ENCODE measurements at regions of chr17 and their contacts with region 1.

Region 1: DNA sequence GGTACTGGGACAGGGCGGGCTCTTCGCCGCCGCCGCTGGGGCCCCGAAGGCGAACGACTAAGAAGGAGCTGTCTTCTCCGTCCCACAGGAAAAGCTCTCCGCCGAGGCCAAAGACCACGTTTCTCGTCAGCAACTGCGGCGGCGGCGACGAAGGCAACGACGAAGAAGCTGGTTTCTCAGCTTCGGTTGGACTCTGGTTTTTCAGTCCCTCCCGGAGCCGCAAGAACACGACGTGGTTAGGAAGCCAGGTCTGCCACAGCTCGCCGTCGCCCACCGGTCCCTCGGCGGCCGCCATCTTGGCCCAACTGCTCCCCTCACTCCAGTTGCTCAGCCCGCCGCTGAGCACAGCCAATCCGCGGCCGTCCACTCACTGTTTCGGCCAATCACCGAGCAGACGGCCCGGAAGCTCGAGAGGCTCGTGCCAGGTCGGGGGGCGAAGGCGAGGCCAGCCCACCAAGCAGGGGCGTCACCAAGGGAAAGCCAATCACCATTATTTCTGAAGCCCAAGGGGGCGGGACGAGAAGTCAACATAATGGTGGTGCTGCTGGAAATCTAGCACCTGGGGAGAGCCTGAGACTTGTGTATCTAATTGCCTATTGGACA is at the start of gene NUP88:
- DNase-seq: peak; percentile 86 to 97 (median 95)
- ATAC-seq: peak; percentile 94
- H3K4me3 ChIP-seq: peak within 1 kb of the TSS; percentile 93
- H3K4me3 Mint-ChIP-seq: peak within 1 kb of the TSS; percentile 93 to 100 (median 98)
- H3K27ac ChIP-seq: peak within 1 kb of the TSS; percentile 94
- H3K27ac Mint-ChIP-seq: peak within 1 kb of the TSS; percentile 89 to 100 (median 99)
- H3K4me1 ChIP-seq: peaks cover 26% of the 10 kb centered on the region in 2 donors
- H3K4me1 Mint-ChIP-seq: peaks cover 16 to 56% (median 40%) of the 10 kb centered on the region in 7 donors
- H3K27me3 ChIP-seq: no peaks in the 10 kb centered on the region
- H3K27me3 Mint-ChIP-seq: peaks cover 0 to 2% (median 0%) of the 10 kb centered on the region in 5 donors
- total RNA-seq, gene NUP88: 85.7 to 135 (median 111) TPM

Region 2: GRCh38 chr17:4948931-4949320 is 470.5 kb before region 1 on chr17:
- CTCF ChIA-PET with region 1: no interaction called
- POLR2A ChIA-PET with region 1: no interaction called
- intact Hi-C with region 1: loop called (anchors 2 to 5 kb)
- DNase-seq: peak in 7 of 9 donors; percentile 69 to 84 (median 79)
- ATAC-seq: peak; percentile 58
- H3K4me3 ChIP-seq: peak overlapping the region; percentile 98
- H3K4me3 Mint-ChIP-seq: peak overlapping the region; percentile 92 to 100 (median 98)
- H3K27ac ChIP-seq: peak overlapping the region; percentile 89
- H3K27ac Mint-ChIP-seq: peak overlapping the region; percentile 83 to 100 (median 96)
- H3K4me1 ChIP-seq: peaks cover 27 to 35% of the 10 kb centered on the region in 2 donors
- H3K4me1 Mint-ChIP-seq: peaks cover 37 to 50% (median 43%) of the 10 kb centered on the region in 7 donors
- H3K27me3 ChIP-seq: no peaks in the 10 kb centered on the region
- H3K27me3 Mint-ChIP-seq: peaks cover 0 to 2% (median 0%) of the 10 kb centered on the region in 5 donors

Region 3: GRCh38 chr17:5111402-5112204 is 307.9 kb before region 1 on chr17 and contains the start of gene ZNF232:
- CTCF ChIA-PET with region 1: no interaction called
- POLR2A ChIA-PET with region 1: no interaction called
- intact Hi-C with region 1: loop called in 1 of 2 experiments (anchors 5 kb)
- DNase-seq: peak; percentile 83 to 95 (median 87)
- ATAC-seq: peak; percentile 94
- H3K4me3 ChIP-seq: peak within 1 kb of the TSS; percentile 80
- H3K4me3 Mint-ChIP-seq: peak within 1 kb of the TSS; percentile 82 to 96 (median 92)
- H3K27ac ChIP-seq: peak within 1 kb of the TSS; percentile 74
- H3K27ac Mint-ChIP-seq: peak within 1 kb of the TSS; percentile 59 to 96 (median 88)
- H3K4me1 ChIP-seq: peaks cover 9% of the 10 kb centered on the region in 2 donors
- H3K4me1 Mint-ChIP-seq: peaks cover 14 to 48% (median 36%) of the 10 kb centered on the region in 7 donors
- H3K27me3 ChIP-seq: peaks cover 0 to 3% of the 10 kb centered on the region in 2 donors
- H3K27me3 Mint-ChIP-seq: peaks cover 12 to 19% (median 16%) of the 10 kb centered on the region in 5 donors
- total RNA-seq, gene ZNF232: 5.1 to 20.3 (median 11.2) TPM

Region 4: DNA sequence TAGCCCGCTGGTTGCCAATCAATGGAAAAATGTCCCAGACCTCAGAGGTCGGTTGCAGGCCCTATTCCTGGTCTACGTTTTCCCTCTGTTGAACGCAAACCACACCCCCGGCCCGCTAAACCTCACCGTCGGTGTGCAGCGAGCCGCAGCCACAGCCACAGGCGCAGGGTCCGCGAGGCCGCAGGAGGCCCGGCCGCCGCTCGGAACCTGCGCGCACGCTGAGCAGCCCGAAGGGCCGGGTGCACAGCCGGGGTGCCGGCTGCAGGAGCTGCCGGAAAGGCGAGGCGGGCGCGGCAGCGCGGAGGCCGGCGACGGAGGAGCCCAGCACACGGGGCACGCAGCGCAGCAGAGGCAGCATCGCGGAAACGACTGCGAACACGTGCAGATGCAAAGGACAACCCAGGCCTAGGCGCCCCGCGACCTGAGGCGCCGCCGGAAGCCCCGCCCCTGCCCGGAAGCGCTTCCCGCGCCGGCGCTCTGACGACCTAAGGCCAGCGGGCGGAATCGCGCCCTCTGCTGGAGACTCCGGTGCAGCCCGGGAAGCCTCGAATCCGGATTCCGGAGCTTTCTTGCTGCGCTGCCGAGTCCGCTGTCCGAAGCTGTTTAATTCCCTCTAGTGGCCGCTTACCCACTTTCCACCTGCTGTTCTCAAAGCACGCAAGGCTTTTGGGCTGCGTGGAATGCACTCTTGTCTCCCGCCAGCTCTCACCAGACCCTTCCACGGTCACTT is 19.4 kb after region 1 on chr17 and contains the start of gene C1QBP:
- CTCF ChIA-PET with region 1: interaction called, 9 read pairs
- POLR2A ChIA-PET with region 1: interaction called, 46 read pairs
- intact Hi-C with region 1: loop called (anchors 1 kb)
- DNase-seq: peak; percentile 85 to 96 (median 91)
- ATAC-seq: peak; percentile 98
- H3K4me3 ChIP-seq: peak within 1 kb of the TSS; percentile 80
- H3K4me3 Mint-ChIP-seq: peak within 1 kb of the TSS; percentile 80 to 95 (median 90)
- H3K27ac ChIP-seq: peak within 1 kb of the TSS; percentile 89
- H3K27ac Mint-ChIP-seq: peak within 1 kb of the TSS; percentile 90 to 98 (median 94)
- H3K4me1 ChIP-seq: peaks cover 19 to 28% of the 10 kb centered on the region in 2 donors
- H3K4me1 Mint-ChIP-seq: peaks cover 16 to 43% (median 37%) of the 10 kb centered on the region in 7 donors
- H3K27me3 ChIP-seq: no peaks in the 10 kb centered on the region
- H3K27me3 Mint-ChIP-seq: no peaks in the 10 kb centered on the region
- total RNA-seq, gene C1QBP: 58.0 to 162 (median 82.3) TPM

Region 5: DNA sequence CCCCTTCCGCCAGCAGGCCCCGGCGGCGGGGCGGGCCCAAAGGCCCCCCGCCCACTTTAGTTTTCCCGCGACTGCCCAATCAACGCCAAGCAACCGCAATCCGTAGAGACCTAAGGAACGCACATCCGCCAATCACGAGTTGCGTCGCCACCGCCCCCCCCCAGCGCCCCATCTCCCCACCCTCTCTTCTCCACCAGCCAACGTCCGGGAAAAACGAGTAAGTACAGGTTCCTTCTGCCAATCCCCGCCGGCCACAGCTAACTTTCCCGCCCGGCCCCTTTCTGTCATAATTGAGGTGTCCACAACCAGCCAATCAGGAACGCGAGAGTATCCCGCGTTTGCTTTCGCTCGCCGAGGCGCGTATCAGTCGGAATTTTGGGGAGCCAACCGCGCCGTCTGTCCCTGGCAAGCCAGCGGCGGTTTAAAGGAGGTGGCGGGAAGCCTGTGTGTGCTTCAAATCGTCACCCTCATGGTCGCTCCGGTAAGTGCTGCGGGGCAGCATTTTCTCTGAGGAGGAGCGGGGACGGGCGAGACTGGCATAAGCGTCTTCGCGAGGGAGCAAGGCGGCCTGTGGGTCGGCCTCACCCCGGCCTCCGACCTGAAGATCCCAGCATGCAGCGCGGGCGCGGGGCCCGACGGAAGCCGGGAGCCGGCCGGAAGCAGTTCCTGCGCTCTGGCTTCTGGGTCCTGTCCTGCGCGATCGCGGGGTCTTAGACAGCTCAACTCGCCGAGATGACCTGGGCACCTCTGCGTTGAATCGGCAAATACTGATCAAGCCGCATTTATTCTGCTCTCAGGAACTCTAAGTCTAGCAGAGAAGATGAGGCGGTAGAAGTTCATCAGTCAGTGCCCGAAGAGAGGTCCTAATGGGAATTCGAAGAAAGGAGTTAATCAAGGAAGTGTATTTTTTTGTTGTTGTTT is 67.0 kb after region 1 on chr17 and contains the start of gene MIS12:
- CTCF ChIA-PET with region 1: no interaction called
- POLR2A ChIA-PET with region 1: interaction called, 16 read pairs
- intact Hi-C with region 1: loop called (anchors 1 kb)
- DNase-seq: peak; percentile 78 to 100 (median 97)
- ATAC-seq: peak; percentile 93
- H3K4me3 ChIP-seq: peak within 1 kb of the TSS; percentile 94
- H3K4me3 Mint-ChIP-seq: peak within 1 kb of the TSS; percentile 88 to 97 (median 94)
- H3K27ac ChIP-seq: peak within 1 kb of the TSS; percentile 98
- H3K27ac Mint-ChIP-seq: peak within 1 kb of the TSS; percentile 95 to 99 (median 98)
- H3K4me1 ChIP-seq: peaks cover 21 to 28% of the 10 kb centered on the region in 2 donors
- H3K4me1 Mint-ChIP-seq: peaks cover 22 to 77% (median 66%) of the 10 kb centered on the region in 7 donors
- H3K27me3 ChIP-seq: no peaks in the 10 kb centered on the region
- H3K27me3 Mint-ChIP-seq: no peaks in the 10 kb centered on the region
- total RNA-seq, gene MIS12: 16.3 to 53.6 (median 38.4) TPM

Region 6: GRCh38 chr17:6443692-6444569 is 1024.5 kb after region 1 on chr17 and contains the start of gene PIMREG:
- CTCF ChIA-PET with region 1: no interaction called
- POLR2A ChIA-PET with region 1: no interaction called
- intact Hi-C with region 1: loop called in 1 of 2 experiments (anchors 5 kb)
- DNase-seq: peak; percentile 74 to 93 (median 84)
- ATAC-seq: peak; percentile 98
- H3K4me3 ChIP-seq: peak within 1 kb of the TSS; percentile 77
- H3K4me3 Mint-ChIP-seq: peak within 1 kb of the TSS; percentile 85 to 98 (median 92)
- H3K27ac ChIP-seq: peak within 1 kb of the TSS; percentile 56
- H3K27ac Mint-ChIP-seq: peak within 1 kb of the TSS in 8 of 9 donors; percentile 63 to 93 (median 84)
- H3K4me1 ChIP-seq: peaks cover 5 to 6% of the 10 kb centered on the region in 2 donors
- H3K4me1 Mint-ChIP-seq: peaks cover 10 to 15% (median 13%) of the 10 kb centered on the region in 7 donors
- H3K27me3 ChIP-seq: no peaks in the 10 kb centered on the region
- H3K27me3 Mint-ChIP-seq: peaks cover 0 to 39% (median 0%) of the 10 kb centered on the region in 5 donors
- total RNA-seq, gene PIMREG: 0.49 to 18.6 TPM in 2 of 5 experiments, not detected in the others

Measured in naive thymus-derived CD4-positive, alpha-beta T cell (primary cell).